GM13976 (cell line): ENCODE measurements at regions of chr20 and their contacts with region 1.

Region 1: GRCh38 chr20:63707549-63708300 is at the starts of genes ARFRP1 and ZGPAT:
- DNase-seq: peak; percentile 93
- CTCF ChIP-seq: no peak

Region 2: DNA sequence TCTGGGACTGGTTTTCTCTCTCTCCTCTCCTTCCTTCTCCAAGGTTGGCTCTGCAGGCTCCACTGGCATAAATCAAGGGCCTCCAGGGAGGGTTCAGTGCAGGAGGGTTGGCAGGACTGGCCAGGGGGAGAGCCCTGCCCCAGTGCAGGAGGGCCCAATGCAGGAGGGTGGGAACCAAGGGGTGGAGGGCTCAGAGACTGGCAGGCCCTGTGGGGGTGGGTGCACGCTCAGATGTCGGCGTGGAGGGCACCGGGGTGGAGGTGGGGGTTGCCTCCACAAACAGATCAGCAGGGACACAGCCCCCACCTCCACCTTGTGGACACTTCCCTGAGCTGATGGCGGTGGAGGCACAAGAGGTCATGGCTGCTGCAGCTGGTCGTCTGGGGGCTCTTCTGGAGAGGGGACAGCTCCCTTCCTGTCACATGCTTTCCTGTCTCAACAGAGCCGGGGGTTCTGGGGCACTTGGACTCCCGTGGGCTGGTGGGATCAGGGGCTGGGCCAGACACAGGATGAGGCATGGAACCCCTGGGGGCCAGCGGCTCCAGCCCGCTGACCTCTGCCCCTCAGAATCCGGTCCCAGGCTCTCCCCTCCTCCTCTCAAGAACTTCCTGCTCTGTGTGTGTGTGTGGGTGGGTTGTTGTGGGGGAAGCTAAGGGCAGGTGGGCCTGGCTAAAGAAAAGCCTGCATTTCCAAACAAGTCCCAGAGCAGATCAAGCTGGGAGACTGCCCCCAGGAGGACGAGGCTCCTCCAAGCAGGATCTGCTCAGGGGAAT is 150.9 kb after region 1 on chr20:
- in situ Hi-C with region 1: loop called (anchors 10 kb)
- DNase-seq: peak; percentile 64
- CTCF ChIP-seq: no peak